Upper lobe of right lung (tissue), 1 donor: ENCODE measurements at regions of chr22 and their contacts with region 1.

Region 1: GRCh38 chr22:50148991-50149721 is 21.4 kb upstream of the PANX2 start:
- DNase-seq: peak; percentile 88
- ATAC-seq: peak; percentile 92
- H3K4me3 ChIP-seq: no peak overlapping the region
- H3K27ac ChIP-seq: no peak overlapping the region
- H3K4me1 ChIP-seq: no peaks in the 10 kb centered on the region
- H3K27me3 ChIP-seq: peaks cover 11% of the 10 kb centered on the region
- CTCF ChIP-seq: peak; percentile 81

Region 2: DNA sequence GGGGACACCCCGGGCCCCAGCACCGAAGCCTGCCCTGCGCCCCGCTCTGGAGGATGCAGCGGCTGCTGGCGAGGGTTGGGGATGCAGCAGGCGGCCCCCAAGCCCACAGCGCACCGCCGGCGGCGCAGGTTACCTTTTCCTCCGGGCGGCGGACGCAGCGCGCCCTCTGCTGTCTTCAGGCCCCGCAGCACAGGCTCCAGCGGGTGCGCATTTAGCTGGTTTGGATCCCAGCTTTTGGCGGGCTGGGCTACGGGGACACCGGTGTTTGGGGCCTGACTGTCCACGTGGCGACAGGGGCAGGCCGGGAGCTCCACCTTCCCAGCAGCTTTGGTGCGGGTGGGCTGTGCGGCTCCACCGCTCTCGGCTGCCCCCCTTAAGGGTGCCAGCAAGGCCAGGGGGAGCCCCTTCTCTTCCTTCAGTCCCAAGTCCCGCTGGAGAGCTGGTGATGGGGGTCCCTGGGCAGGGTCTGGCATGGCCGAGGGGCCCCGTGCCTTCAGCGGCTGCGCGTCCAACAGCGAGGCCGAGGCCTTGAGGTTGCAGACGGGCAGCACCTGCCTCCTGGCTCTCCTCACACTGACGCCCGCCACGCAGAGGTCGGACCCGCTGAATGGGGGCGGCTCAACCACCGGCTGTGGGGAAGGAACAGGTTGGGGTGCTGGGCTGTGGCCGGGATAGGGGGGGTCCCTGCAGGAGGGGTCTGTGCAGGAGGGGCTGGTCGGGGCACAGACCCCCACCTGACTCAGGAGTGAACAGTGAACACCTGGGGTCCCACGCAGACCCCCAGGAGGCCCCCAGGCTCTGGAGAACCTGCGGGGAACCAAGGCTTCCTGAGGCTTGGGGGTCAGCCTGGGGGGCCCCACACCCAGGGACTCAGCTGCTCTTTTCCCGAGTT is 118.6 kb before region 1 on chr22:
- intact Hi-C with region 1: no loop called
- DNase-seq: peak; percentile 90
- ATAC-seq: peak; percentile 93
- H3K4me3 ChIP-seq: no peak overlapping the region
- H3K27ac ChIP-seq: no peak overlapping the region
- H3K4me1 ChIP-seq: peaks cover 10% of the 10 kb centered on the region
- H3K27me3 ChIP-seq: peaks cover 12% of the 10 kb centered on the region
- CTCF ChIP-seq: peak; percentile 93

Region 3: GRCh38 chr22:50209893-50210292 is 60.7 kb after region 1 on chr22:
- intact Hi-C with region 1: loop called (anchors 10 kb)
- DNase-seq: peak; percentile 81
- ATAC-seq: peak; percentile 68
- H3K4me3 ChIP-seq: no peak overlapping the region
- H3K27ac ChIP-seq: no peak overlapping the region
- H3K4me1 ChIP-seq: peaks cover 9% of the 10 kb centered on the region
- H3K27me3 ChIP-seq: no peaks in the 10 kb centered on the region
- CTCF ChIP-seq: peak; percentile 83